ENCODE measurements at regions of chr12 and their contacts with region 1.

Region 1: GRCh38 chr12:103877934-103878510 is 37.0 kb upstream of the NT5DC3 start:
- DNase-seq: no peak
- ATAC-seq: peak; percentile 53
- H3K4me3 Mint-ChIP-seq: no peak overlapping the region
- H3K27ac Mint-ChIP-seq: no peak overlapping the region
- H3K4me1 Mint-ChIP-seq: peaks cover 24% of the 10 kb centered on the region
- H3K27me3 Mint-ChIP-seq: no peaks in the 10 kb centered on the region
- CTCF ChIP-seq: peak; percentile 47

Region 2: GRCh38 chr12:103771466-103771865 is 106.6 kb before region 1 on chr12:
- CTCF ChIA-PET with region 1: no interaction called
- POLR2A ChIA-PET with region 1: no interaction called
- intact Hi-C with region 1: loop called (anchors 5 kb)
- DNase-seq: no peak
- ATAC-seq: no peak
- H3K4me3 Mint-ChIP-seq: no peak overlapping the region
- H3K27ac Mint-ChIP-seq: no peak overlapping the region
- H3K4me1 Mint-ChIP-seq: no peaks in the 10 kb centered on the region
- H3K27me3 Mint-ChIP-seq: no peaks in the 10 kb centered on the region
- CTCF ChIP-seq: no peak

Region 3: DNA sequence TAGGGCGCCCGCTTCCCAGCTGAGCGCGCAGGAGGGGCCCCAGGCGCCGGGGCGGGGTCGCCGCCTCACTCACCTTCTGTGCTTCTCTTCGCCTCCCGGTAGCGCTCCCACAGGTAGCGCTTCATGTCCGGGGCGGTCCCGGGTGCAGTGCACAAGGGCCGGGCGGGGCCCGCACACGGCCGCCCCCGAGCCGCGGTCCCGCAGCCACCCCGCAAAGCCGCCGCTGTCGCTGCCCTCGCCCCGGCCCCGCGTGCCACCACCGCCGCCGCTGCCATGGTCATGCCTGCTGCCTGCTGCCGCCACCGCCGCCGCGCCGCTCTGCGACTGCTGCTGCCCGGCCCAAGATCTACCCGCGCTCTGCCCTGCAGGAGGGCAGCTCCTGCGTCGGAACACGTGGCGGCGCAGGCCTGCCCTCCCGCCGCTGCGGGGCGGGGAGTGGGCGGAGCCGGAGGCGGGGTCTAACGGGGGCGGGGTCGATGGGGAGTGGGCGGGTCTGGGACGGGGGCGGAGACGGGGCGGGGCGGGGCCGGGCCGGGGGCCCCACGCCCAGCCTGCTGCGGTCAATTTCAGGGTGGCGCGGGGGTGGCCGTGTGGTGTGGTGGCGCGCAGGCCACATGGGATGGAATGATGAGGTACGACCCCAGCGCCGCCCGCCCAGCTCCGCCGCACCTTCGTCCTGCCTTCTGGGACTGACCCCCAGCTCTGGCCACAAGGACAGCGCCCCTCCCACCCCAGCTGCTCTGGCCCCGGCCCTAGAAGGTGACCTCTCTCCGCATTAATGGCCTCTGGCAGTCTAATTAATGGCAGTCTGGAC is 36.9 kb before region 1 on chr12 and contains the start of gene NT5DC3:
- CTCF ChIA-PET with region 1: no interaction called
- POLR2A ChIA-PET with region 1: no interaction called
- intact Hi-C with region 1: loop called (anchors 2 kb)
- DNase-seq: peak; percentile 83
- ATAC-seq: peak; percentile 91
- H3K4me3 Mint-ChIP-seq: peak within 1 kb of the TSS; percentile 89
- H3K27ac Mint-ChIP-seq: peak within 1 kb of the TSS; percentile 84
- H3K4me1 Mint-ChIP-seq: peaks cover 32% of the 10 kb centered on the region
- H3K27me3 Mint-ChIP-seq: no peaks in the 10 kb centered on the region
- CTCF ChIP-seq: no peak
- total RNA-seq, gene NT5DC3: 11.6 and 12.4 TPM in 2 replicates

Region 4: GRCh38 chr12:103947871-103948555 is 70.0 kb after region 1 on chr12:
- CTCF ChIA-PET with region 1: no interaction called
- POLR2A ChIA-PET with region 1: no interaction called
- intact Hi-C with region 1: no loop called
- DNase-seq: no peak
- ATAC-seq: no peak
- H3K4me3 Mint-ChIP-seq: no peak overlapping the region
- H3K27ac Mint-ChIP-seq: no peak overlapping the region
- H3K4me1 Mint-ChIP-seq: no peaks in the 10 kb centered on the region
- H3K27me3 Mint-ChIP-seq: no peaks in the 10 kb centered on the region
- CTCF ChIP-seq: no peak

Region 5: GRCh38 chr12:103978384-103978982 is 100.5 kb after region 1 on chr12:
- CTCF ChIA-PET with region 1: no interaction called
- POLR2A ChIA-PET with region 1: no interaction called
- intact Hi-C with region 1: loop called (anchors 1 kb)
- DNase-seq: no peak
- ATAC-seq: peak; percentile 90
- H3K4me3 Mint-ChIP-seq: no peak overlapping the region
- H3K27ac Mint-ChIP-seq: no peak overlapping the region
- H3K4me1 Mint-ChIP-seq: peaks cover 22% of the 10 kb centered on the region
- H3K27me3 Mint-ChIP-seq: no peaks in the 10 kb centered on the region
- CTCF ChIP-seq: no peak

Measured in activated B cell treated with CpG ODN at 0.5 μM for 24 hours (primary cell).